PC-3 (cell line): ENCODE measurements at regions of chr2 and their contacts with region 1.

Region 1: GRCh38 chr2:209577376-209578357 is 153.8 kb downstream of the MAP2 start:
- DNase-seq: peak; percentile 62
- ATAC-seq: no peak
- H3K4me3 ChIP-seq: no peak overlapping the region
- H3K27ac ChIP-seq: no peak overlapping the region
- H3K4me1 ChIP-seq: no peaks in the 10 kb centered on the region
- H3K27me3 ChIP-seq: no peaks in the 10 kb centered on the region
- CTCF ChIP-seq: peak; percentile 62

Region 2: DNA sequence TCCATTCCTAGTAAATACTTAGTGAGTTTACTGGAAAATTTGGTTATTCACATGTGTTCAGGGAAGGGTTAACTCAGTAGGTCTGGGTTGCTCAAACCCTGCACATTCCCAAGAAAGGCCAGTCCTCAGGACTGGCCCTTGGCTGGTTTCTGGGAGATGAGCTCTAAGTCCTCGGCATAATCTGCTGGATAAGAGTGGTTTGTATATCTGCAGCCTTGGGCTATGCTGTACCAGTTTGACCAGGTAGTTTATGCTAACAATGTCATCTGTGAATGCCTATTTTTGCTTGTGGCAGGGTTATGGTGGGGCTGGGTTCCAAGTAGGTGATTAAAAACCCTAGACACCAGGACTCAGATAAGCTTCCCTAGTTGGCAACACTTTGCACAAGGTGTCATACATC is 1178.5 kb before region 1 on chr2:
- CTCF ChIA-PET with region 1: no interaction called
- POLR2A ChIA-PET with region 1: no interaction called
- intact Hi-C with region 1: loop called (anchors 5 kb)
- DNase-seq: peak; percentile 18
- ATAC-seq: no peak
- H3K4me3 ChIP-seq: no peak overlapping the region
- H3K27ac ChIP-seq: no peak overlapping the region
- H3K4me1 ChIP-seq: no peaks in the 10 kb centered on the region
- H3K27me3 ChIP-seq: peaks cover 37% of the 10 kb centered on the region; the same call in 1 of the 2 replicates
- CTCF ChIP-seq: no peak

Region 3: DNA sequence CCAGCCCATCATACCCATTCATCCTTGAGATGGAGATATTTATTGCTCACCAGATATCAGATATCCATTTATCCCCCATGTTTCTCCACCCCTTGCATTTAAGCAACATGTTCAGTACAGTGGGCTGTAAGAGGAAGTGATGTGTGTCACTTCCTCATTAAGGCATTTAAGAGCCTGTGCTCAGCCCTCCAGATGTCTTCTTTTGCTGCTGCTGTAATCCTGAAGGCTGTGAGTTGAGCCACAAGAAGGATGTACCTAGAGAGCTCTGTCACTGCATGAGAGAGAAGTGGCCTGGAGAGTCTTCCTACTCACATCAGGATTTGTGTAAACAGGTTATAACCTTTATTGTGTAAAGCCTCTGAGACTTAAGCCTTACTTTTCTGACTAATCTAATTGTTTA is 42.1 kb after region 1 on chr2:
- CTCF ChIA-PET with region 1: no interaction called
- POLR2A ChIA-PET with region 1: no interaction called
- intact Hi-C with region 1: no loop called
- DNase-seq: no peak
- ATAC-seq: peak; percentile 38; the same call in 1 of the 2 replicates
- H3K4me3 ChIP-seq: no peak overlapping the region
- H3K27ac ChIP-seq: no peak overlapping the region
- H3K4me1 ChIP-seq: no peaks in the 10 kb centered on the region
- H3K27me3 ChIP-seq: no peaks in the 10 kb centered on the region
- CTCF ChIP-seq: no peak

Region 4: DNA sequence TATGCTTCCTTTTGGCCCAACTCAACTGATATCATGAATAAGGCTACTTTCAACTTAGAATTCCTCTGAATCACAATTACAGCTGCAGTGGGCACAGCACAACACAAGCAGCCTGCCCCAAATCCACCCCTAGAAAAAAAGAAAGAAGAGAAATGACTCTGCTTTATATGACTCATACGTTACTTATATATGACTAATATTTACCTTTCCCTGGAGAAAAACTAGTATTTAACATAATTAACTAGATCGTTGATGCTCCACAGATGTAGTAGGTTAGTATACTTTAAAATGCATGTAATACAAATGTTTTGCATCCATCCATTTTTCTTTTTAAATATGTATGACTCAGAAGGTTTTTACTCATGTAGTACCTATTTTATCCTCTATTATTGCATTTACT is 60.7 kb after region 1 on chr2:
- CTCF ChIA-PET with region 1: no interaction called
- POLR2A ChIA-PET with region 1: no interaction called
- intact Hi-C with region 1: loop called (anchors 5 kb)
- DNase-seq: peak; percentile 86
- ATAC-seq: peak; percentile 77
- H3K4me3 ChIP-seq: no peak overlapping the region
- H3K27ac ChIP-seq: peak overlapping the region; percentile 80
- H3K4me1 ChIP-seq: peaks cover 53% of the 10 kb centered on the region
- H3K27me3 ChIP-seq: no peaks in the 10 kb centered on the region
- CTCF ChIP-seq: no peak

Region 5: GRCh38 chr2:209960676-209961630 is 383.3 kb after region 1 on chr2:
- CTCF ChIA-PET with region 1: no interaction called
- POLR2A ChIA-PET with region 1: no interaction called
- intact Hi-C with region 1: loop called (anchors 5 kb)
- DNase-seq: peak; percentile 68
- ATAC-seq: peak; percentile 77
- H3K4me3 ChIP-seq: no peak overlapping the region
- H3K27ac ChIP-seq: no peak overlapping the region
- H3K4me1 ChIP-seq: no peaks in the 10 kb centered on the region
- H3K27me3 ChIP-seq: peaks cover 46% of the 10 kb centered on the region
- CTCF ChIP-seq: peak; percentile 87